GM12878 (cell line): ENCODE measurements at regions of chr11 and their contacts with region 1.

Region 1: GRCh38 chr11:114880442-114880841 is 202.1 kb downstream of the NXPE2 start:
- DNase-seq: no peak
- ATAC-seq: no peak
- H3K4me3 ChIP-seq: no peak overlapping the region
- H3K27ac ChIP-seq: no peak overlapping the region
- H3K4me1 ChIP-seq: no peaks in the 10 kb centered on the region
- H3K27me3 ChIP-seq: no peaks in the 10 kb centered on the region
- CTCF ChIP-seq: no peak
- EP300 ChIP-seq: no peak
- POLR2A ChIP-seq: no peak
- RAD21 ChIP-seq: no peak

Region 2: DNA sequence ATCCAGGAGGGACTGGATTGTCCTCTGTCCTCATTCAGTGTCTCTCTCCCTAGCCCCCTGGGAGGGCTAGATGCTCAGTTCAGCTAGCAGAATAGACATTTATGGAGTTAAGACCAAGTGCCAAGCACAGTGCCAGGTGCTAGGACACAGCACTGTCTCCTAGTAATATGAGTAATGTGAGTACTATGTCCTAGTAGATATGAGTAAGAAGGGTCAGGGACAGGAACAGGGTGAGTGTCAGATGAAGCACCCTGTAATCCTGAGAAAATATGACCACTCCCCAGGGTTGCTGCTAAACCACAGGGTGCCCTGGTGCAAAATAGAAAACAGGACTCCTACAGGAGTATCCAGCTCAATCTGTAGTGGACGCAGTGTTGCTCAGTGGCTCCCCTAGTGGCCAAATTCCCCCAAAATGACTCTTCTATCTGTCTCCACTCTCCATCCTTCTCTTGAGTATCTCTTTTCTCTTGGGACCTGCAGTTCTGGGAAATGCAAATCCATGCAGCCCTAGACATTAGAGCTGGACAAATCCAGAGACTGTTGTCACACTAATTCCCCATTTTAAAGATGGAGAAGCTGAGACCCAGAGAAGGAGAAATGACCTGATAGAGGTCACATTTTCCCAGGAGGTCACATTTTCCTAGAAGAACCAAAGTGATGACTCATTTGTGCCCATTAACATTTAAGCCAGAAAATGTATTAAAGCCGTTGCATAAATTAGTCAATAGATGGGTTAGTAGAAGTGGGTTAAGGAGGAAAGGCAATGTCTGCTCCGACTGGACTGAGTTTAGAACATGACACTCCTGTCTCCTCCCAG is 12.1 kb after region 1 on chr11:
- CTCF ChIA-PET with region 1: interaction called, 11 read pairs
- POLR2A ChIA-PET with region 1: no interaction called
- RAD21 ChIA-PET with region 1: no interaction called
- SMC1A ChIA-PET with region 1: no interaction called
- in situ Hi-C with region 1: no loop called
- intact Hi-C with region 1: no loop called
- DNase-seq: no peak
- ATAC-seq: peak; percentile 47; the same call in 2 of the 3 replicates
- H3K4me3 ChIP-seq: no peak overlapping the region
- H3K27ac ChIP-seq: no peak overlapping the region
- H3K4me1 ChIP-seq: no peaks in the 10 kb centered on the region
- H3K27me3 ChIP-seq: no peaks in the 10 kb centered on the region; a peak in 1 of 4 replicates
- CTCF ChIP-seq: peak in 2 of 3 experiments; percentile 52 to 59; a peak in 5 of 6 replicates
- EP300 ChIP-seq: no peak
- POLR2A ChIP-seq: no peak
- RAD21 ChIP-seq: no peak

Region 3: DNA sequence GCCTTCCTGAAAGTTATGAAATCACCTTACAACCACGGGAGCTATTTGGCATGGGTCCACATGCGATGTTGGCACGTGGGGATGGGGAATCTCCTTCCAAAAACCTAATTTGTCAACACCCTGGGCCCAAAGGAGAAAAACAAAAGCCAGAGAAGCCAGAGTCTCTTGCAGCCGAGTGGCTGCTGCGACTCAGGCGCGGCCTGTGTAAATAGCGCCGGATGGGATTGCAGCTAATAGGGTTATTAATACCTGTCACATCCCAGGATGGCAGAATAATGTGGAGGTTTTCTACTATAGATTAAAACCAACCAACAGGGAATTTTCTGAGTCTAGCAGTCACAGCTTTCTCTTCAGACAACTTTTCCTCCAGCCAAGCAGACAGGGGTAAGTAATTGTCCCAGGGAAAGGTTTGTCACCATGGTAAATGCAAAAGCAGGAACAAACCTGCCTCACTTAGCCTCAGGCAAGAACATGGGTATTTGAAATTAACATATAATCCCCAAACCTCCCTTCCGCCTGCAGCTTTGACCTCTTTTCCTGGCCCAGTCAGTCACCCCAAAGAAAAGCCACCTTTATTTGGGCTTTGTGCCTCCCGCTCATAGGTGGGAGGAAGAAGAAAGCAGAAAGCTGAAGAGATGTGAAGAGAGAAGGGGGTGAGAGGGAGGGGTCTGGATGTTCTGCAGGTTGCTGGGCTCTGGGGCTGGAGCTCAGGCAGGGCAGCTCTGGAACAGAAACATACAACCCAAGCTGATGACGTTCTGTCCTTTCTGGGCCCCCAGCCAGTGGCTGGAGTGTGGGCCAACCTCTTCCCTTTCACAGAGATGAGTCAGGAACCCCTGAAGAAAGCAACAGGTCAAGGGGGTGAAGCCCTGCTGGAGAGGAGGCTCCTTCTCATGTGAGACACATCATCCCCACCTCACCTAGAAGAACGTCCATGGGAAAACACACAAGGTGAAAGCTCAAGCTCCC is 174.4 kb after region 1 on chr11:
- CTCF ChIA-PET with region 1: no interaction called
- POLR2A ChIA-PET with region 1: no interaction called
- RAD21 ChIA-PET with region 1: no interaction called
- SMC1A ChIA-PET with region 1: no interaction called
- in situ Hi-C with region 1: no loop called
- intact Hi-C with region 1: no loop called
- DNase-seq: no peak
- ATAC-seq: no peak
- H3K4me3 ChIP-seq: no peak overlapping the region
- H3K27ac ChIP-seq: no peak overlapping the region
- H3K4me1 ChIP-seq: no peaks in the 10 kb centered on the region
- H3K27me3 ChIP-seq: no peaks in the 10 kb centered on the region
- CTCF ChIP-seq: no peak
- EP300 ChIP-seq: no peak
- POLR2A ChIP-seq: no peak
- RAD21 ChIP-seq: no peak